Tibial artery (tissue), 4 donors: ENCODE measurements at regions of chr10 and their contacts with region 1.

Region 1: GRCh38 chr10:4283846-4284610 is 499.0 kb upstream of the KLF6 start:
- DNase-seq: peak; percentile 82 to 89
- H3K4me3 ChIP-seq: no peak overlapping the region
- H3K27ac ChIP-seq: peak overlapping the region; percentile 77 to 83
- H3K4me1 ChIP-seq: peaks cover 4 to 82% (median 58%) of the 10 kb centered on the region in 4 donors
- H3K27me3 ChIP-seq: no peaks in the 10 kb centered on the region
- CTCF ChIP-seq: no peak

Region 2: DNA sequence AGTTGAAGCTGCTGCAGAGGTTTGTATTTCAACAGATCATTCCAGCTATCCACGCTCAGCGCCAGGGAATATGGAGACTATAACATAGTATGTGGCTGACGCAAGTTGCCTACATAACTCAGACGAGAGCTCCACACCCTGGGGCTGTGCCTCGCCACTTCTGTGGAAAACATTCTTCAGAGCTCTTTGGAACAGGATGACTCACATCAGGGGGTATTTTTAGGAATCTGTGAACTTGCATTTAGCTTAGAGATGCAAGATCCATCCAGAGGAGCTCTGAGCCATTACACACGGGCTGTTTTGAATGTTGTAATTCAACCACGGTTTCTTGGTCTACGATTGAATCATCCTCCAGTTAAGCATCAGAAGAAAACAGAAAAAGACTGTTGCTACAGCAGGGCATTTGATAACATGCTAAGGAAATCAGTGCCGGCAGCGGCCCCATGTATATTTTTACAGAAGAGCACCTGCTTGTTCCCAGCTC is 60.5 kb after region 1 on chr10:
- intact Hi-C with region 1: loop called (anchors 5 kb)
- DNase-seq: peak; percentile 88 to 90
- H3K4me3 ChIP-seq: no peak overlapping the region
- H3K27ac ChIP-seq: peak overlapping the region; percentile 72
- H3K4me1 ChIP-seq: peaks cover 0 to 31% (median 19%) of the 10 kb centered on the region in 4 donors
- H3K27me3 ChIP-seq: no peaks in the 10 kb centered on the region
- CTCF ChIP-seq: peak; percentile 31 to 48